ENCODE measurements at regions of chr19 and their contacts with region 1.

Region 1: GRCh38 chr19:3479834-3480215 is 500 bp downstream of the SMIM24 start:
- DNase-seq: peak; percentile 62
- H3K4me3 Mint-ChIP-seq: no peak overlapping the region
- H3K27ac Mint-ChIP-seq: no peak overlapping the region
- H3K4me1 Mint-ChIP-seq: peaks cover 14% of the 10 kb centered on the region
- H3K27me3 Mint-ChIP-seq: peaks cover 11% of the 10 kb centered on the region

Region 2: GRCh38 chr19:3304871-3305423 is 174.9 kb before region 1 on chr19:
- CTCF ChIA-PET with region 1: interaction called, 13 read pairs
- DNase-seq: peak; percentile 85
- H3K4me3 Mint-ChIP-seq: no peak overlapping the region
- H3K27ac Mint-ChIP-seq: no peak overlapping the region
- H3K4me1 Mint-ChIP-seq: no peaks in the 10 kb centered on the region
- H3K27me3 Mint-ChIP-seq: peaks cover 14% of the 10 kb centered on the region

Region 3: DNA sequence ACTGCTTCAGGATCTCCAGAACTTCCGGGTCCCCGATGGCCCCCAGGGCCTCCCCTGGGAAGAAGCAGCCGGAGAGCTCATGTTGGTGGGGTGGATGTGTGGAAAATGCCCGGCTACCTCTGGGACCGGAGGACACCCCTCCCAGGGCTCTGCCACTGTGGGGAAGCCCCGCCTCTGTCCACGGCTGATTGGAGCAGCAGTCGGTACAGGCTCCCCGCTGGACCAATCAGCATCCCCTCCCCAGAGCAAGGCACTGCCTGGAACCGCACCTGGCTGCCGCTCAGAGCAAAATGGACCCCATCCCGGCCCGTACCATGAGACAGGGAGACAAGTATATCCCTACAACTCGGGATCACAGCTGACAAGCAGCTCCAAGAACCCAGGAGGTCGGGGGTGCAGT is 14.2 kb after region 1 on chr19:
- CTCF ChIA-PET with region 1: interaction called, 10 read pairs
- DNase-seq: peak; percentile 64
- H3K4me3 Mint-ChIP-seq: peak overlapping the region; percentile 26
- H3K27ac Mint-ChIP-seq: peak overlapping the region; percentile 81
- H3K4me1 Mint-ChIP-seq: peaks cover 28% of the 10 kb centered on the region
- H3K27me3 Mint-ChIP-seq: no peaks in the 10 kb centered on the region